ENCODE measurements at regions of chr4 and their contacts with region 1.

Region 1: DNA sequence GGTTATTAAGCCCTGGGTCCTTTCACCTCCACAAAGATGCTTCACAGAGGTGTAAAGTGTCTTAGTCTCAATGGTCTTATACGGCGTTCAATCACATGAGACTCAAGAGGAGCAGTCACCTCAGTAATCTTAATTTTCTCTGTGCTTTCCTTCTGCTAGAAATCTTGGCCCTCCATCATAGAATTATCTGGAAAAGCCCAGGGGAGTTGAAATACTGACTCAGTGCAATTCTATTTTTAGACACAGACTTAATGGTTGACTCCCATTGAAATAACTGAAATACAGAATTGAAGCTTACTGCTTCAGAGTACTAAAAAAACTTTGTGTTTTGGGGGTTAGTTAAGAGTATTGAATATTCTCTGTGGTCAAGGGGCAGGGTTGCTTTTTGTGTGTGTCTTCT is 94.5 kb upstream of the IL15 start:
- DNase-seq: no peak
- H3K4me3 ChIP-seq: no peak overlapping the region
- H3K27ac ChIP-seq: no peak overlapping the region
- H3K4me1 ChIP-seq: no peaks in the 10 kb centered on the region
- H3K27me3 ChIP-seq: no peaks in the 10 kb centered on the region
- CTCF ChIP-seq: no peak
- POLR2A ChIP-seq: no peak

Region 2: DNA sequence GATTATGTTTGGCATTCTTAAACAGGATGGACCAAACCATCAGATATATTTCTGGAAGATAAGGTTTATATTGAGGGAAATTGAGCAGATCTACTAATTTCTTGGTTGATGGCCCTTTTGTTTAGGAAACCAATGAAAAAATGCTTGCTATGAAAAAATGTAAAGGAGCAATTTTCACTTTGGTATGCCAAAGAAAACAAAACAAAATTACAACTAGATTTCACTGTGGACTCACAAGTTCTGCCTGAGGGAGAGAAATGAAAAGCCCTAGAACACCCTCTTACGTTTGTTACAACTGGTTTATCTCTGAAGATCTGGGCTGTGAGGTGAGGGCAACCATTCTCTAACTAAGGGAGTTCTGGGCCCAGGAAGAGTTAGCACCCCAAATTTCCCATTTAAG is 28.0 kb before region 1 on chr4:
- intact Hi-C with region 1: loop called (anchors 2 kb)
- DNase-seq: no peak
- H3K4me3 ChIP-seq: no peak overlapping the region
- H3K27ac ChIP-seq: no peak overlapping the region
- H3K4me1 ChIP-seq: no peaks in the 10 kb centered on the region
- H3K27me3 ChIP-seq: no peaks in the 10 kb centered on the region
- CTCF ChIP-seq: no peak
- POLR2A ChIP-seq: no peak

Region 3: DNA sequence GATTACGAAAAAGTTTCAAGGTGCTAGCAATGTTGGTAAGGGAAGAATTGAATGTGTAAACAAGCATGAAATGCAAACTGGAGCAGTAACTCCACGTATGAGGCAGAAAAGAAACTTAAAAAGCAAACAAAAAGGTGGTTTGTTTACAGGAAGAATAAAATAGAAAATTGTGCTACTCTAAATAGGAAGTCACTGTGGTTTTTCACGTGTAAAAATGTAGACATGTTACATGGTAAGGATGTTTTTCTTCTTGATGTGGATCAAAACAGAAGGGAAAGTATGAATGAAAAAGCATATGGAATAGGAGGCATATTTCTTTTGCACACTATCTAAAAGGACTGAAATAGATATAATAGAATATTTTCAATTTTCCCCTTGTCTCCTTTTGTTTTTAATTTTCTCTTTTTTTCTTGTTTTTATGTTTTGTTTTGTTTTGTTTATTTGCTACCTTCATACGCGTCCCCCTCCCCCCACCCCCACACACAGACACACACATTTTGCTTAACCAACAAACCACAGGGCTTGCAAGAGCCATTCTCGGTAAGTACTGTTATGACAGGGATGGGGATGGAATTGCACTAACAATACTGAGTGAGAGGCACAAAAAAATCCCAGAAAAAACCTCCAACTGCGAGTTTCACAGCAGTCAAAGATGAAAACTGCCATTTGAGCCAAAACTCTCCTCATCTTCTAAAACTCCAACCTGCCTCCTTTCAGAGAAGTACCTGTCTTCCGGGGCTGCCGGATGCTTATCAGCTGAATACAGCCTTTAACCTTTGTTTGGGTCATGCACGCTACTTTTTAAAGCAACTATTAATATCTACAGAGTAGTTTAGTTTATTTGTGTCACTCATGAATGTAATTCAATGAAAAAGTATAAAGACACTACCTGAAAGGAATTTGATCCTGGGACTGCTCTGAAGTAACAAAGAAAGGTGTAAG is 230.3 kb after region 1 on chr4:
- intact Hi-C with region 1: no loop called
- DNase-seq: no peak
- H3K4me3 ChIP-seq: no peak overlapping the region
- H3K27ac ChIP-seq: no peak overlapping the region
- H3K4me1 ChIP-seq: no peaks in the 10 kb centered on the region
- H3K27me3 ChIP-seq: no peaks in the 10 kb centered on the region
- CTCF ChIP-seq: no peak
- POLR2A ChIP-seq: no peak